Mammary epithelial cell (primary cell): ENCODE measurements at regions of chr19 and their contacts with region 1.

Region 1: DNA sequence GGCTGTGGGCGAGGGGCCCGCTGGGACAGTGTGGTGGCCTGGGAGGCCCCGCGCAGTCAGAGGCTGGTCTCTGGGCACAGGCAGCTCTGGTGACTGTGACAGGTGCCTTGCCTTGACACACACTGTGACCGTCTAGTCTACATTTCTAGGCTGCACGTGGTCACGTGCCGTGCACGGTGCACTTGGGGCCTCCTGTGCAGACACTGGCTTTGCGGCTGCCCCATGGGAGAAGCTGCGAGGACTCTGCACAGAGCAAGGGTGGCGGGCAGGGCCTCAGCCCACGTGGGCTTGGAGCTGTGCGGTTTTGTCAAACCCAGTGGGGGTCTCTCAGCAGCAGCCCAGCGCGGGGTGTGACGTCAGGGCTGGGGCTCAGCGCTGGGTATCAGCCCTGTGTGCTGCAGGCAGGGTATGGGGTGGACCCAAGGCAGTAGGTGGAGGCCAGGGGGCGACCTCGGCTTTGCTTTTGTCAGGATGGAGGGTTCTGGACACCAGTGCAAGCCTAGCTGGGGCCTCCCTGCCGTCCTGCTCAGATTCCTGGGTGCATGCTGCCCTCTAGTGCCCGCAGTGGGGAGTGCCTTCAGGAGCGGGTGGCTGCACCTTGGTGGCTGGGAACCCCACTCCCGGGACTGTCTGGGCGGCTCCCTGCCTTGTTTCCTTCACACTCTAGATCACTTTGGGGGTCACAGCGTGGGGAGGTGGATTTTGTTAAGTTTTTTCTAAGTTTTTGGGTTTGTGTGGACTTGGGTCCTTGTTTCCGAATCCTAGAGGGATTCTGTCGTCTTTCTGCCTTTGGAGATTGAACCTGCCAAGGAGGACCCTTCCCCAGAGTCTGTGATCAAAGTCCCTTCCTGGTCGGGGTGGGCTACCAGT is 62.6 kb downstream of the KDM4B start:
- DNase-seq: peak; percentile 48
- H3K4me3 ChIP-seq: no peak overlapping the region
- H3K27ac ChIP-seq: no peak overlapping the region
- H3K4me1 ChIP-seq: peaks cover 16% of the 10 kb centered on the region
- H3K27me3 ChIP-seq: no peaks in the 10 kb centered on the region
- CTCF ChIP-seq: peak; percentile 89 to 92

Region 2: DNA sequence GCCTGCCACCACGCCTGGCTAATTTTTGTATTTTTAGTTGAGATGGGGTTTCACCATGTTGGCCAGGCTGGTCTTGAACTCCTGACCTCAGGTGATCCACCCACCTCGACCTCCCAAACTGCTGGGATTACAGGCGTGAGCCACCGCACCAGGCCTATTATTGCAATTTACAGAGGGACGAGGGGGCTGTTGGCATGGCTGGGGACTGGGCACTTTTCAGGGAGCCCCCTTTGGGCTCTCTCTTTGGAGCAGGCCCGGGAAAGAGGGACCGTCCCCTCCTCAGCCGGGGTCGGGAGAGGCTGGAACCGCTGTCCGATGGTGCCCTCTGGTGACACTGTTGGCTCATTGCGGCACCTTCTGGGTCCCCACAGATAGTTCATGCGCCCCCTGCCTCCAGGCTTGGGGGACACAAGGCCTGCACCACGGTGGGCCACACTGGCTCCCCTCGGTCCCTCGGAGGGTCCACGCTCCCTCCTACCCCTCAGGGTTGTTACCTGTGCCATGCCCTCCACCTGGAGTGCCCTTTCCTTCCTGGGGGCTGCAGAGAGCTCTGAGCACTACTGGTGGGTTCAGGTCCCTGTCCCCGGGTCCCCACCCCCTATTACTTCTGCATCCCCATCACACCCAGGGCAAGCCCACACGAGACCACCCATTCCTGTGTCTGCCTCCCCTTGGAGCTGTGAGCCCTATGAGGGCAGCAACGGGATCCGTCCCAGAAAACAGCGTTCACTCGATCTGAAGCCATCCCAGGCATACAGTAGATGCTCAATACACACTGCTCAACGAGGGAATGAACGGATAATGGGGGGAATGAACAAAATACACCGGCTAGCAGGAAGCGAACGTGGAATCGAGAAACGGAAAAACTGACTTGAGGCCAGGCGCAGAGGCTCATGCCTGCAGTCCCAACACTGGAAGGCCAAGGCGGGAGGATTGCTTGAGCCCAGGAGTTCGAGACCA is 227.4 kb before region 1 on chr19:
- CTCF ChIA-PET with region 1: interaction called, 4 read pairs
- dilution Hi-C with region 1: no loop called
- in situ Hi-C with region 1: loop called in 1 of 2 experiments (anchors 10 kb)
- intact Hi-C with region 1: loop called (anchors 1 kb)
- DNase-seq: no peak
- H3K4me3 ChIP-seq: no peak overlapping the region
- H3K27ac ChIP-seq: no peak overlapping the region
- H3K4me1 ChIP-seq: peaks cover 10% of the 10 kb centered on the region
- H3K27me3 ChIP-seq: no peaks in the 10 kb centered on the region
- CTCF ChIP-seq: peak; percentile 63 to 84

Region 3: DNA sequence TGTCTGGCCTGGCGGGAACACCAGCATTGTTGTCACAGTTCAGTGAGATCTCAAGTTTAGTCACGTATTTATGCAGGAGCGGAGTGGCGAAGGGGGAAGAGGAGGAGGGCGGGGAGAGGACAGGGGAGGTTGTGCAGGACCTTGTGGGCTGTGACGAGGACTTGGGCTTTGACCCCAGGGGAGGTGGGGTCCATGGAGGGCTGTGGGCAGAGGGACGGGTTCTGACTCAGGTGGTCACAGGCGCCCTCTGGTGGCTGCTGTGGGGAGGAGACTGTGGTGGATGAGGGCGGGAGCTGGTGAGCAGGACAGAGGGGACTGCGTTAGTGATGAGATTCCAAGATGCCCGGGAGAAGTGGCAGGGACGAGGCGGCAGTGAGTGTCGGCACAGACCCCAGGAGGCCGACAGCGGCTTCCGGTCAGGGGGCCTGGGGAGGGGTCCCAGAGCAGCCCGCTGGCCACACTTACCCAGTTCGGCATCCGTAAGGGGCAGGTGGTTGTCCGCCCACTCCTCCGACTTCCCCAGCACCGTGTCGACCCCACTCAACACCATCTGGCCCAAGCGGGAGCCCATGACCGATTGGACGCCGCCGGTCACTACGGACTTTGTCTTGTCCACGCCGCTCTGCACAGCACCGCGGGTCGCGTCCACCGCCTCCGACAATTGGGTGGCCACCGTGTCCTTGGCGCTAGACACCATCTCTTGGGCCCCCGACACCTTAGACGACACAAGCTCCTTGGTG is 179.7 kb before region 1 on chr19:
- CTCF ChIA-PET with region 1: no interaction called
- dilution Hi-C with region 1: no loop called
- in situ Hi-C with region 1: no loop called
- intact Hi-C with region 1: loop called (anchors 1 kb)
- DNase-seq: no peak
- H3K4me3 ChIP-seq: no peak overlapping the region
- H3K27ac ChIP-seq: no peak overlapping the region
- H3K4me1 ChIP-seq: no peaks in the 10 kb centered on the region
- H3K27me3 ChIP-seq: no peaks in the 10 kb centered on the region
- CTCF ChIP-seq: peak; percentile 67 to 84

Region 4: DNA sequence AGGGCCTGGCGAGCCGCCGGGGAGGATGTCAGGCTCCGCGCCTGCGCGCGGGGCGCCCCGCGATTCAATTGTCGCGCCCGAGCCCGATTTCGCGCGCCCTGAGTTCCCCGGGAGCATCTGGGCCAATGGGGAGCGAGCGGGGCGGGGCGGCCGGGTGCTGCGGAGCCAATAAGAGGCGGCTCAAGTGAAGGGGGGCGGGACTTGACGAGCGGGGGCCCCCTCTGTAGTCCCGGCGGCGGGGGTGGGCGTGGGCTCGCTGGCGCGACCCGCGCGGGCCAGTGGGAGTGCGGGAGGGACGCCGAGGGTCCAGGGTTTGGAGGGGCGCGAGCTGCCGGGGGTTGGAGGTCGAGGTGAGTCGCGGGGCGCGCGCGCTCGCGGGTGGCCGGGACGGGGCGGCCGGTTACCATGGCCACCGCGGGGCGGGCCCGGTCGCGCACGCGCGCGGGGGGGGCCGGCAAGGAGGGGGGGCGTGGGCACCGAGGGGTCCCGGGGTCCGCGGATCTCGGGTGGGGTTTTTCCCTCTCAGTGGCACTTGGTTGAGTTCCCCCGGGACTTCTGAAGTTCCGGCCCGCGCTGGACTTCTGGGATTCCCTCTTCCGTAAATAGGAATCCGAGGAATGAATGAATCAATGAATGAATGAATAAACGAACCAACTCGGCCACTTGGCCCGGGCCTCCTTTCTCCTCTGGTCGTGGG is 121.4 kb before region 1 on chr19:
- CTCF ChIA-PET with region 1: no interaction called
- dilution Hi-C with region 1: no loop called
- in situ Hi-C with region 1: loop called in 1 of 2 experiments (anchors 10 kb)
- intact Hi-C with region 1: loop called (anchors 1 kb)
- DNase-seq: peak; percentile 89
- H3K4me3 ChIP-seq: peak overlapping the region; percentile 57 to 71 (median 64)
- H3K27ac ChIP-seq: peak overlapping the region; percentile 76
- H3K4me1 ChIP-seq: peaks cover 48% of the 10 kb centered on the region
- H3K27me3 ChIP-seq: no peaks in the 10 kb centered on the region
- CTCF ChIP-seq: no peak

Region 5: GRCh38 chr19:5001615-5002014 is 29.9 kb before region 1 on chr19:
- CTCF ChIA-PET with region 1: no interaction called
- dilution Hi-C with region 1: no loop called
- in situ Hi-C with region 1: no loop called
- intact Hi-C with region 1: loop called (anchors 1 kb)
- DNase-seq: peak; percentile 25
- H3K4me3 ChIP-seq: no peak overlapping the region
- H3K27ac ChIP-seq: peak overlapping the region; percentile 38
- H3K4me1 ChIP-seq: peaks cover 11% of the 10 kb centered on the region
- H3K27me3 ChIP-seq: no peaks in the 10 kb centered on the region
- CTCF ChIP-seq: peak; percentile 67 to 77